Endothelial cell of umbilical vein (primary cell): ENCODE measurements at regions of chr3 and their contacts with region 1.

Region 1: GRCh38 chr3:52056968-52057805 is 816 bp upstream of the DUSP7 start:
- DNase-seq: peak; percentile 99
- H3K4me3 ChIP-seq: peak overlapping the region; percentile 38 to 78 (median 39)
- H3K27ac ChIP-seq: peak overlapping the region; percentile 23
- H3K4me1 ChIP-seq: peaks cover 34% of the 10 kb centered on the region
- H3K27me3 ChIP-seq: no peaks in the 10 kb centered on the region
- CTCF ChIP-seq: no peak
- POLR2A ChIP-seq: peak; percentile 29

Region 2: GRCh38 chr3:52001443-52001974 is 55.7 kb before region 1 on chr3:
- CTCF ChIA-PET with region 1: interaction called, 260 read pairs
- POLR2A ChIA-PET with region 1: no interaction called
- dilution Hi-C with region 1: no loop called
- intact Hi-C with region 1: loop called (anchors 1 kb)
- DNase-seq: peak; percentile 70
- H3K4me3 ChIP-seq: no peak overlapping the region
- H3K27ac ChIP-seq: no peak overlapping the region
- H3K4me1 ChIP-seq: peaks cover 13% of the 10 kb centered on the region
- H3K27me3 ChIP-seq: no peaks in the 10 kb centered on the region
- CTCF ChIP-seq: peak; percentile 94 to 97
- POLR2A ChIP-seq: no peak

Region 3: GRCh38 chr3:52041118-52041731 is 16.0 kb before region 1 on chr3:
- CTCF ChIA-PET with region 1: interaction called, 43 read pairs
- POLR2A ChIA-PET with region 1: interaction called, 8 read pairs
- dilution Hi-C with region 1: no loop called
- intact Hi-C with region 1: loop called (anchors 1 kb)
- DNase-seq: no peak
- H3K4me3 ChIP-seq: no peak overlapping the region
- H3K27ac ChIP-seq: no peak overlapping the region
- H3K4me1 ChIP-seq: peaks cover 8% of the 10 kb centered on the region
- H3K27me3 ChIP-seq: no peaks in the 10 kb centered on the region
- CTCF ChIP-seq: peak; percentile 10 to 22
- POLR2A ChIP-seq: no peak

Region 4: DNA sequence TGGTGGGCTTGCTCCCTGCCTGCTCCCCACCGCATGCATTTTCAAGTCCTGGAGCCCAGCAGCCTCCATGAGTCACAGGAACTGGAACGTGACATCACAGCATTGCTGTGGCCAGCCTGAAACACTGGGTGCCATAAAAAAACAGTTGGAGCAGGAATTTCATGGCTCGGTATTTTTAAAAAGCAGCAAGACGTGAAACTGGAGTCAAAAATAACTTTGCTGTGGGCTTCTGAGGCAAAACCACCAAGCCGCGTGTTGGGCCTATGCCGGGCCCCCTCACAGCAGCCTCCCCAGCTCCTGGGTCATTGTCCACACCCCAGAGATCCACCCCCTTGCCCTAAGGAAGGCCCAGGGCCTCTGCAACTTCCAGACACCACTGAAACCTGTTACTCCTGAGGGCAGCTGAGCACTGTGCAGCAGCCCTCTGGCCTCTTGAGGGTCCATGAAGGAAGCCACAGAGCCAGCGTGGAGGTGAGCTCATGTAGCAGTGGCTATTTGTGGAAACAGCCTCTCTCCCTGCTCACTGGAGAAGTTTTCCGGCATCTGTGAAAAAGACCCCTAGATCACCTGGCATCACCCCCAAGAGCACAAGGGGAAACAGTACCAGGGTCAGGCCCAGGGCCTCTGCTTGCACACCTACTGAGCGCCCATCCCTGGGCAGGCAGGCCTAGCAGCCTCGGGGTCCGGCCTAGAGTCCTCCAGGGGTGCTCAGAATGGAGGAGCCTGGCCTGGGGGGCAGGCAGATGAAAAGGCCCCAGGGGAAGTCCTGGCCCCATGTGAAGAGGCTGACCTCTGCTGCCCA is 33.1 kb after region 1 on chr3:
- CTCF ChIA-PET with region 1: interaction called, 14 read pairs
- POLR2A ChIA-PET with region 1: interaction called, 3 read pairs
- dilution Hi-C with region 1: no loop called
- intact Hi-C with region 1: loop called (anchors 1 kb)
- DNase-seq: peak; percentile 79
- H3K4me3 ChIP-seq: no peak overlapping the region
- H3K27ac ChIP-seq: peak overlapping the region; percentile 96
- H3K4me1 ChIP-seq: peaks cover 58% of the 10 kb centered on the region
- H3K27me3 ChIP-seq: no peaks in the 10 kb centered on the region
- CTCF ChIP-seq: no peak
- POLR2A ChIP-seq: no peak

Region 5: GRCh38 chr3:52144034-52144795 is 87.0 kb after region 1 on chr3:
- CTCF ChIA-PET with region 1: interaction called, 11 read pairs
- POLR2A ChIA-PET with region 1: no interaction called
- dilution Hi-C with region 1: no loop called
- intact Hi-C with region 1: loop called (anchors 1 kb)
- DNase-seq: peak; percentile 63
- H3K4me3 ChIP-seq: no peak overlapping the region
- H3K27ac ChIP-seq: no peak overlapping the region
- H3K4me1 ChIP-seq: no peaks in the 10 kb centered on the region
- H3K27me3 ChIP-seq: no peaks in the 10 kb centered on the region
- CTCF ChIP-seq: peak; percentile 93 to 94
- POLR2A ChIP-seq: no peak